Natural killer cell (primary cell): ENCODE measurements at regions of chr21 and their contacts with region 1.

Region 1: GRCh38 chr21:25005388-25005787 is 601.9 kb downstream of the MRPL39 start:
- DNase-seq: no peak
- ATAC-seq: no peak
- H3K4me3 ChIP-seq: no peak overlapping the region
- H3K4me3 Mint-ChIP-seq: no peak overlapping the region
- H3K27ac ChIP-seq: no peak overlapping the region
- H3K27ac Mint-ChIP-seq: no peak overlapping the region
- H3K4me1 ChIP-seq: no peaks in the 10 kb centered on the region
- H3K4me1 Mint-ChIP-seq: no peaks in the 10 kb centered on the region
- H3K27me3 ChIP-seq: no peaks in the 10 kb centered on the region
- H3K27me3 Mint-ChIP-seq: no peaks in the 10 kb centered on the region
- CTCF ChIP-seq: no peak

Region 2: DNA sequence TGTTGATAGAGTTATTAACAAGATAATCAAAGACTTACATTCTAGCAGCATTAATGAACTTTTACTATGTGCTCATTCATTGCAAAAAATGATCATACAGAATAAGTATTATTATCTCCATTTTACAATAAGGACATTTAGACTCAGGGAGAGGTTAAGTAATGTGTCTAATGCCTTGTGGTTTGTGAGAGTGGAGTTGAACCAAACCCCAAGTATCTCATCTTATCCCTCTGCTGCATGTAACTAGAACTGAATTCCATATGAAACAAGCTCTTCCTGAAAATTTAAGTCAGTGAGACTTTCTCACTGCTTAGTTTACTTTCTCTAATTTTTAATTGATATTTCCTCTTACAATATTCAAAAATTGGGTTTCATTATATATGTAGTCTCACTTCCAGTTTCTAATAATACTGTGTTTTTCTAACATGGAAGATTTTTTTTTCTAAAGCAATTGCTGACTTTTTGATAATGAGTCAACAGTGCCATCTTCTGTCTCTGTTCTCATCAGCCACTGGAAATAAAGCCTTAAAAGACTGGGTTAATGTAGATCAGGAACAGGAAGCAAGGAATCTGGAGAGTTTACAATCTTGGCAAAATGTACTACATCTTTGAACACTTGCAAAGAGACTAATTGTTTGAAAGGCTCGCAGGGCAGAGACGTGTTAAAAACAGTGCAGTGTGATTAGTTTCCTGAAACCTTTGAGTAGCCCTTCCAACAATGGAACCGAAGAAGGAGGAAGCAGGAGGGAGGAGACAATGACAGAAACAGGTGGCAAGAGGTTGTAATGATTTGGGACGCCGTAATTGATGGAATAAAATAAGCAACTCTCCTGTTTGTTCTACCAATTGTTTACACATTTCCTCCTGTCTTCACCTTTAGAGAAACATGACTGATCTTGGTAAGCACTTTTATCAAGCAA is 34.3 kb after region 1 on chr21:
- intact Hi-C with region 1: loop called (anchors 2 kb)
- DNase-seq: no peak
- ATAC-seq: no peak
- H3K4me3 ChIP-seq: no peak overlapping the region
- H3K4me3 Mint-ChIP-seq: no peak overlapping the region
- H3K27ac ChIP-seq: no peak overlapping the region
- H3K27ac Mint-ChIP-seq: no peak overlapping the region
- H3K4me1 ChIP-seq: no peaks in the 10 kb centered on the region
- H3K4me1 Mint-ChIP-seq: no peaks in the 10 kb centered on the region
- H3K27me3 ChIP-seq: no peaks in the 10 kb centered on the region
- H3K27me3 Mint-ChIP-seq: no peaks in the 10 kb centered on the region
- CTCF ChIP-seq: no peak